ENCODE measurements at regions of chr7 and their contacts with region 1.

Region 1: DNA sequence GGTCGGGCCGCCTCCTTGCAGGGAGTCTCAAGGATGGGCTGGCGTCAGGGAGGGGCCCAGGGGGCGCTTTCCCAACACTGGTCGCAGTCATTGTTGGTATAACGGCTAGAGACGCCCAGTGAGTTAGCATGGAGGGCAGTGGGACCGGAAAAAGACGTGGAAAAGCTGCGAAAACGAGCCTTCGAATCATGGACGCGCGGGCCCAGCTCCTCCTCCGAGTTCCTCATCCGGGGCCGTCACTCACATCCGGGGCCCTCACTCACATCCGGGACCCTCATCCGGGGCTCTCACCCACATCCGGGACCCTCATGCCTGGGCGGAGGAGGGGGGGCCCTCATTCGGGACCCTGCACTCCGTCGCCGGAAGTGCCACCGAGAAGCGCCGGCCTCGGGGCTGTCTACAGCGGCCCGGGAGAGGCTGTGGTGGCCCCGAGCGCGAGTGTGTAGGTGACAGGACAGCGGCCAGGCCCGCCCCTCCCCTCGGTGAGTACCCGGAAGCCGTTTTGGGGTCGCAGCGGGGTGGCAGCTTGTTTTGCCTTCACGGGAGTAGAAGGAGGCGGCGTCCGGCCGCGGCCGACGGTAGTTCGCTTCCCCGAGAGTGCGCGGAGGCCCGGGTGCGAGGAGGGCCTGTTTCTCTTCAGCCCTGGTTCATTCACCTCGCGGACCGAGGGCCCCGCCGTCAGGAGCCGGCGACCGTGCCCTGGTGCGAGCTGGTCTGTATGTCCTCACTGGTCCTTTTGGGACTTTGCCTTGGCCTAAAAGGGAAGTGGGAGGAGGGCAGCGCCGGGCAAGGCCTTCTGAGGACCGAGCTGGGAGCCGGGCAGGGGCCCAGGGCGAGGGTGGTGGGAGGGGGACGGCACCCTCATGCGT is at the start of gene ZNF655:
- DNase-seq: peak; percentile 93

Region 2: GRCh38 chr7:99504603-99505323 is 53.8 kb before region 1 on chr7 and contains the start of gene ZKSCAN5:
- CTCF ChIA-PET with region 1: interaction called, 4 read pairs
- POLR2A ChIA-PET with region 1: interaction called, 15 read pairs
- DNase-seq: peak; percentile 86

Region 3: GRCh38 chr7:99576251-99576650 is 17.7 kb after region 1 on chr7:
- CTCF ChIA-PET with region 1: no interaction called
- POLR2A ChIA-PET with region 1: interaction called, 12 read pairs
- DNase-seq: no peak

Region 4: GRCh38 chr7:99616359-99617191 is 58.0 kb after region 1 on chr7 and contains the start of gene ZSCAN25:
- CTCF ChIA-PET with region 1: interaction called, 3 read pairs
- POLR2A ChIA-PET with region 1: interaction called, 31 read pairs
- DNase-seq: peak; percentile 96